Activated naive CD4-positive, alpha-beta T cell treated with anti-CD3 and anti-CD28 coated beads for 36 hours (primary cell): ENCODE measurements at regions of chr10 and their contacts with region 1.

Region 1: DNA sequence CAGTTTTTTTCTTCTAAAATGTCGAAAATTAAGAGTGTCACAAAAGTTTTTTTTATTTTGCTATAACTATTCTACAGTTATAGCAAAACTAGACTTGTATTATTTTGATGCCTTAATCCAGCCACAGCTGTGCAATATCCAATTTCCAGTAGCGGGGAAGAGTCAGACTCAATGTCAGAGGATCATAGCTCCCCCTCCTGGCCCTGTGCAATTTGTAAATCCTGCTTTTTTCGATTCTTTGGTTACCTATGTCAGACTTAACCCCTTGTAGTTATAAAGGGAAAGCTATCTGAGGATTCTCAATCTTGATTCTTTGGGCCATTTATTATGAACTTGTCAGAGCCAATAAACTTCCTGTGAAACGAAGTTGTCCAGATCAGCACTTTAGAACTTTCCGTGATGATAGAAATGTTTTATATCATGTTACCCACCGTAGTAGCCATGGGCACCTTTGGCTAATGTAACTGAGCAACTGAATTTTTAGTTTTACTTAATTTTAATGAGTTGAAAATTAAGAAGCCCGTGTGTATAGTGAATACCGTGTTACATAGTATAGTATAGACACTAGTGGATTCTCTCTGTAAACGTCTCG is 87.7 kb upstream of the PRKCQ start:
- DNase-seq: peak; percentile 77
- H3K4me3 Mint-ChIP-seq: no peak overlapping the region
- H3K27ac Mint-ChIP-seq: no peak overlapping the region
- H3K4me1 Mint-ChIP-seq: peaks cover 14% of the 10 kb centered on the region
- H3K27me3 Mint-ChIP-seq: no peaks in the 10 kb centered on the region

Region 2: DNA sequence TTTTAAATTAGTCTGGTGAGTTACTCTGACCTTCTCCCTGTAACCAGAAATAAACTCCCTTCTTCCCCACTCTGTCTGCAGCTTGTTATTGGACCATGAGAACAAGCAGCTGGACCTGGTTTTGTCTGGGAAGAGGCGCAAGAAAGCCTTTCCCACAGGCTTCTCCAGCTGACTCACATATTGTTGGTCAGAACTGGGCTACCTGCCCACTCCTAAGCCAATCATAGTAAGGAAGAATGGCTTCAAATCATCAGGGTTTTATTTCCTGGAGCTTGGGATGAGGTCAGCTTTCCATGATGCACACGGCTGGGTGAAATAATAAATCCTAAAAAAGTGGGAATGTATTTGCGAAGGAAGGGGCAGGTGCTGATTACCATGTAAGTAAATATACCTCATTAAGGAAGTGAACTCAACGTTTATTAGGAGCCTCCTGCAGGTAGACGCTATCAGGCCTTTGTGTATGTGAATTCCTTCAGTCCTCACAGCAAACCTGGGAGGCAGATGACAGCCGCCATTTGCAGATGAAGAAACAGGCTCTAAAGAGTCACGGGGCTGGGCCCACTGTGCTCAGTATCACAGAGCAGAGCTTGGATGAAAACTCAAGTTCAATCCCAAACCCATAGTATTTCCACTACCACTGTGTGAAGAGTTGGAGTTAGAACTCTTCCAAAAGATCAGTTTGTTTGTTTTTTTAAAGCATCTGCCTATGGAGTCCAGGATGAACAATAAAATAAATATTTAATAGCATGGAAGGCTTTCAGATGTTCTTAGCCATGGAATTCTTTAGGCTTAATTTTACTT is 723.2 kb before region 1 on chr10:
- CTCF ChIA-PET with region 1: no interaction called
- intact Hi-C with region 1: no loop called
- DNase-seq: no peak
- H3K4me3 Mint-ChIP-seq: no peak overlapping the region
- H3K27ac Mint-ChIP-seq: no peak overlapping the region
- H3K4me1 Mint-ChIP-seq: peaks cover 10% of the 10 kb centered on the region
- H3K27me3 Mint-ChIP-seq: no peaks in the 10 kb centered on the region

Region 3: DNA sequence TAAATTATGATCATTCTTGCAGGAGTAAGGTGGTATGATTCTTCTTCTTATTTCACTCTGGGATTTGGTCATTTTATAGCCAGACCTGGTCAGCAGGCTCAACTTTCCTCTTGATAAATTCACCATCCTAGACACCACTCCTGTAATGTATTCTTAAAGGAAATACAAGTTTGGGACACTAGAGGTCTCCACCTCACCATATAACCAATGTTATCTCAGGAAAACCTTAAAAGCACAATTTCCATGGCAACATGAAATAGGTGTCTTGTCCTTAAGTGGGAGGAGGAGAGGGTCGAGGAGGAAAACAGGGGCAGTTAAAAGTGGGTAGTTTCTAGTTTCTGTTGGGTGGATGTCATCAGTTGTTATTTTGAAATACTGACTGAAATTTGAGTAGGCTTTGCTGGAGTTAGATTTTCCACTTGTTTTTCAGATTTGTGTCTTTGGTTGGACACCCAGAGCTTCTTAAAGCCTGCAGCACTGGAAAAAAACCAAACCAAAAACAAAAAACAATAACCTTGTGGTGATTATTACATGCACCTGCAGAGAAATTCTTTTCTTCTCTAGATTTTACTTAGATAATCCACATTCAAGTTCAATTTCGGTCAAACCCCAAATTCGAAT is 250.8 kb before region 1 on chr10:
- CTCF ChIA-PET with region 1: interaction called, 12 read pairs
- intact Hi-C with region 1: loop called (anchors 1 kb)
- DNase-seq: no peak
- H3K4me3 Mint-ChIP-seq: no peak overlapping the region
- H3K27ac Mint-ChIP-seq: no peak overlapping the region
- H3K4me1 Mint-ChIP-seq: no peaks in the 10 kb centered on the region
- H3K27me3 Mint-ChIP-seq: no peaks in the 10 kb centered on the region

Region 4: GRCh38 chr10:6473901-6474370 is 193.8 kb before region 1 on chr10:
- CTCF ChIA-PET with region 1: interaction called, 6 read pairs
- intact Hi-C with region 1: loop called (anchors 2 kb)
- DNase-seq: peak; percentile 36
- H3K4me3 Mint-ChIP-seq: peak overlapping the region; percentile 71
- H3K27ac Mint-ChIP-seq: peak overlapping the region; percentile 89
- H3K4me1 Mint-ChIP-seq: peaks cover 53% of the 10 kb centered on the region
- H3K27me3 Mint-ChIP-seq: no peaks in the 10 kb centered on the region

Region 5: DNA sequence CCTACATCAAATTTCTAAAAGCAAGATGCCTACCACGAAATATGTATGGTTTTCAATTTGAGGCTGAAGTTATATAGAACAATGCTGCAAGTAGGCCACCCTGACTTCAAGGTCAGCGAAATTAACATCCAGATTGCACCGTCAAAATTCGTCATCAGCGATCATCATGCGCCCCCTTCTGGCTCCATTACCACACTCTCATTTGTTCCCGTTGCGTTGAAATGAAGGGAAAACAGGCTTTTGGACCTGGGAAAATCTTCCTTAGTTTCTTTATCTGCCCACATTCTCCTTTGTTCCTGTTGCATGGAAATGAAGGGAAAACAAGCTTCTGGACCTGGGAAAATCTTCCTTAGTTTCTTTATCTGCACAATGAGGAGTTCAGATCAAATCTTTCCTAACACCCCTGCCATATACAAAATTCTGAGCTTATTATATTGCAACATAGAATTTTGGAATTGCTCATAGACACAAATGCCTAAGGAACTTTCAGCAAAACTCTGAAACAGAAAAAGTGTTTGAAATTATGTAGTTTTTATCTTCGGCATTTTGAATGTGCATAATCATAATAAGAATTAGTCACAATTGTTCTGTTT is 10.5 kb after region 1 on chr10:
- CTCF ChIA-PET with region 1: interaction called, 38 read pairs
- intact Hi-C with region 1: loop called (anchors 1 kb)
- DNase-seq: peak; percentile 79
- H3K4me3 Mint-ChIP-seq: no peak overlapping the region
- H3K27ac Mint-ChIP-seq: no peak overlapping the region
- H3K4me1 Mint-ChIP-seq: peaks cover 2% of the 10 kb centered on the region
- H3K27me3 Mint-ChIP-seq: no peaks in the 10 kb centered on the region

Region 6: GRCh38 chr10:6694447-6695140 is 26.8 kb after region 1 on chr10:
- CTCF ChIA-PET with region 1: no interaction called
- intact Hi-C with region 1: no loop called
- DNase-seq: peak; percentile 27
- H3K4me3 Mint-ChIP-seq: no peak overlapping the region
- H3K27ac Mint-ChIP-seq: no peak overlapping the region
- H3K4me1 Mint-ChIP-seq: peaks cover 14% of the 10 kb centered on the region
- H3K27me3 Mint-ChIP-seq: no peaks in the 10 kb centered on the region

Region 7: GRCh38 chr10:6737758-6738505 is 70.2 kb after region 1 on chr10:
- CTCF ChIA-PET with region 1: no interaction called
- intact Hi-C with region 1: no loop called
- DNase-seq: peak; percentile 18
- H3K4me3 Mint-ChIP-seq: no peak overlapping the region
- H3K27ac Mint-ChIP-seq: no peak overlapping the region
- H3K4me1 Mint-ChIP-seq: peaks cover 5% of the 10 kb centered on the region
- H3K27me3 Mint-ChIP-seq: peaks cover 22% of the 10 kb centered on the region

Region 8: GRCh38 chr10:6995831-6996230 is 328.1 kb after region 1 on chr10:
- CTCF ChIA-PET with region 1: no interaction called
- intact Hi-C with region 1: no loop called
- DNase-seq: no peak
- H3K4me3 Mint-ChIP-seq: no peak overlapping the region
- H3K27ac Mint-ChIP-seq: no peak overlapping the region
- H3K4me1 Mint-ChIP-seq: peaks cover 1% of the 10 kb centered on the region
- H3K27me3 Mint-ChIP-seq: no peaks in the 10 kb centered on the region